BJ (cell line): ENCODE measurements at regions of chr4 and their contacts with region 1.

Region 1: GRCh38 chr4:85953651-85954018 is 406.2 kb downstream of the MAPK10 start:
- DNase-seq: no peak
- H3K4me3 ChIP-seq: no peak overlapping the region
- H3K27me3 ChIP-seq: no peaks in the 10 kb centered on the region
- CTCF ChIP-seq: no peak

Region 2: DNA sequence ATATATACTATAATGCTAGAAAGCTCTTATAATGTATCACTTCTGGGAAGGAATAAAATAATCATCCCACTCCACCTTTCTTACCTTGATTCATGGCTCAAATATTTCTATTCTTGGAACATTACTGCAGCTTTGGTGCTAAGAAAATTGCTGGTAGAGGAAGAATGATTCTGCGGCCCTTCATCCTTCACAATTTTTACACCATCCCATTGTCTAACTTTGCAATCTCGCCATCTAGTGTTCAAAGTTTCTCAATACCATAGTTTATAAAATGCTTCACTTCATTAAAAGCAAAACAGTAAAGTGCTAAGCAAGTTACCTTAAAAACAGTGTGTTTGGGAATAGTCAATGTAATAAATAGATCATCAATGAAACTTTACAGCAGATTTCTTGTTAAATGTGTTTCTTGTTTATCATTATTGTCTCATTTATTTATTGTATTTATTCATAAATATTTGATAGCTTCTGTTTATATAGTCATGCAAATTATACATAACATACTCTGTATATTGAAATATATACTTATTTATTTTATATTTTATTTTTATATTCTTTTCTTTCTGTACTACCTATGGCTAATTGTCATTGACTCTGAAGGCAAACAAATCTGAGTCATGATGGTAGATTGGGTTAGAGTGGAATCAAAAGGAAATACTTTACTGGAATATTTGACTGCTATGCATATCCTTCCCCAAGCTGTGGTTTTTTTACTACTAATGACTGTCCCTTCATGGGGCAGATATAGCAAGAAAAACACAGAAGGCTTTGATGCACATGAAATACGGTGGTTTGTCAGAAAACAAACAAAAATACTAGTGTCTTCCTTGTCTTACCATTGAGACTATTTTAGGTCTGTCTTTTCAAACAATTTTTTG is 15.5 kb after region 1 on chr4:
- CTCF ChIA-PET with region 1: interaction called, 13 read pairs
- POLR2A ChIA-PET with region 1: no interaction called
- DNase-seq: no peak
- H3K4me3 ChIP-seq: no peak overlapping the region
- H3K27me3 ChIP-seq: no peaks in the 10 kb centered on the region
- CTCF ChIP-seq: peak; percentile 52

Region 3: DNA sequence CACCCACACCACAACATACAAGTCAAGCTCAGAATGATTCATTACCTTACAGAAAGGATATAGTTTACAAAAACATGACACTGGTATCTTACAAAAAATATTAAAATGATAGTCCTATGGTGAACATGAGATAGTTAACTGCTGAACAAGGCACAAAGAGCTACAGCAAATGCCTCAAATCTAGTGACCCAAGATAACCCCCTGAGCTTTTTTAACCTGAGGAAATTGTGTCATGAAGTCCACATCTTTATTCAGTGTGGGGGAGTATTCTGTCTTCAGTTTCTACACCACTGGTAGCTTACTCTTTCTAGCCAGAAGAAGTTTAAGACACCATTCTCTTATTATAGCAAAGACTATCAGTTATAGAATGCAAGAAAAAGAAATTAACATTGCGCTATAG is 187.5 kb after region 1 on chr4:
- CTCF ChIA-PET with region 1: no interaction called
- POLR2A ChIA-PET with region 1: no interaction called
- DNase-seq: no peak
- H3K4me3 ChIP-seq: no peak overlapping the region
- H3K27me3 ChIP-seq: no peaks in the 10 kb centered on the region
- CTCF ChIP-seq: no peak